ENCODE measurements at regions of chr17 and their contacts with region 1.

Region 1: DNA sequence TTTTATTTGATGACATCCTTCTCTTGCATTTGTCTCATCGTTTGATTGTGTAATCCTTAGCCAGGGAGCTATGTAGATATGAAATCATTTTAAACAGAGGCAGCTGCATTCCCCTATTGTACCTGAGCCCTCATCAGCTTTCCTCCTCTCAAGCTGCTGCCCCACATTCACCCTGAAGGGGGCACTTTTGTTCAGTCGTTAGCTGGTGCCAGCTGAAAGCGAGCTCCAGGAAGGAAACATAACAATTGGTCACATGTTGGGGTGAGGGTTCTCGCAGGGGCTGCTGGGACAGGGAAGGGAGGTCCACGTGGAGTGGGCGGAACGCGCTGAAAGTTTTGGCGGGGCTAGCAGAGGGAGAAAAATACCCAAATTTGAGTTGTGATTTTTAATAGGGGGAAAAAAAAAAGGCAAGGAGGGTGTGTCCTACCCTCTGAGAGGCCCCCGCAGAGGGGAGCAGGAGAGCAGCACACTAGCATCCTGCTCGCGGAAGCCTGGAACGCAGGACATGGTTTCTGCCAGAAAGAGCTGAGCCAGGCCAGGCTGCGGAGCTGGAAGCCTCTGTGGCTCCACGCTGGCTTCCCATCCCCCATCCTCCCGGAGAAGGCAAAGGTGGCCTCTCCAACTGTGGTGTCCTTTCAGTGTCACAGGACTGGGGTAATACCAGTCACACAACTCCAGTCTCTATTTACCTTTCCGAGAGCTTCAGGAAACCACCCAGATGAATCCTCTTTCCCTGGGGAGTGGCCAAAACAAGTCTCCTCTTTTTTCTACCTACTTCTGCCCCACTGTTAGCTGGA is 8.5 kb upstream of the MSL1 start:
- DNase-seq: peak; percentile 83
- ATAC-seq: peak; percentile 91
- H3K4me3 ChIP-seq: peak overlapping the region; percentile 37; the same call in 1 of the 2 replicates
- H3K27ac ChIP-seq: peak overlapping the region; percentile 82
- H3K4me1 ChIP-seq: peaks cover 28% of the 10 kb centered on the region
- H3K27me3 ChIP-seq: no peaks in the 10 kb centered on the region
- CTCF ChIP-seq: peak; percentile 84 to 98 (median 91); a peak in 4 of 6 replicates
- EP300 ChIP-seq: no peak; a peak in 1 of 4 replicates
- POLR2A ChIP-seq: peak; percentile 65
- RAD21 ChIP-seq: peak; percentile 92

Region 2: GRCh38 chr17:40021451-40021971 is 91.8 kb before region 1 on chr17:
- CTCF ChIA-PET with region 1: interaction called, 58 read pairs
- POLR2A ChIA-PET with region 1: interaction called, 3 read pairs
- RAD21 ChIA-PET with region 1: interaction called, 52 read pairs
- SMC1A ChIA-PET with region 1: interaction called, 50 read pairs
- in situ Hi-C with region 1: no loop called
- intact Hi-C with region 1: no loop called
- DNase-seq: no peak
- ATAC-seq: no peak
- H3K4me3 ChIP-seq: no peak overlapping the region
- H3K27ac ChIP-seq: no peak overlapping the region
- H3K4me1 ChIP-seq: no peaks in the 10 kb centered on the region
- H3K27me3 ChIP-seq: no peaks in the 10 kb centered on the region
- CTCF ChIP-seq: no peak
- EP300 ChIP-seq: no peak
- POLR2A ChIP-seq: no peak
- RAD21 ChIP-seq: no peak

Region 3: DNA sequence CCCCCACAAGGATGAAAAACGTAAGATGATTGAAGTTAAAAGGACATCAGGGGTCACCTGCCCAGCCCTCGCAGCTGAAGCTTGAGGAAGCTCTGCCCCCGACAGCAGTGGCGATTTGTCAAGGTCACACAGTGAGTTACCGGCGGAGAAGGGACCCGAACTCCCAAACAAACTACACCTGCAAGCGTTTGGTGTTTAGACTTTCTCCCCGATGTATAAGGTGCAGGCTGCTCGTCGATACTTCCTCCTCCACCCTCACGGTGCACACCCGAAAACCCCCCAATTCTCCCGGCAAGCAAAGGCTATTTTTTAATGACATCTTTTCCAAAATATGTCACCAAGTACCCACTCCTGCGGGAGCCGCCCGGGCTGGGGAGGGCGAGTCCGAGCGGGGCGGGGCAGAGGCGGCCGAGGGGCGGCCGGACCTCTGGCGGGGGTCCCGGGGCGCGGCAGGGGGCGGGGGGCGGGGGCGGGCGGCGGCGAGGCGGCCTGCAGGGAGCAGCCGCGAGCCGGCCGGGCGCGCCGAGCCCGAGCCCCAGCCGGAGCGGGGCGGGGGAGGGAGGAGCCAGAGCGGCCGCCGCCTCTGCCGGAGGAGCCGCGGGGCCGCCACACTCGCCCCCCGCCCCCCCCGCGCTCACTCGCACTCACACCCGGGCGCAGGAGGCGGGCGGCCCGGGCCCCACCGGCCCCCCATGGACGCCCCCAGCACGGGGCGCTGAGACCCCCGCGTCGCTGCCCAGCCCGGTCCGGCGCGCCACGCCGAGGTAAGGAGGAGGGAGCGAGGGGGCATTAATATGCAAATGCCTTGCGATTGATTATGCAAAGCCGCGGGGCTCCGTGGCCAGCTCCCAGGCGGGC is 50.8 kb before region 1 on chr17 and contains the start of gene THRA:
- CTCF ChIA-PET with region 1: interaction called, 120 read pairs
- POLR2A ChIA-PET with region 1: interaction called, 3 read pairs
- RAD21 ChIA-PET with region 1: interaction called, 42 read pairs
- SMC1A ChIA-PET with region 1: interaction called, 19 read pairs
- in situ Hi-C with region 1: no loop called
- intact Hi-C with region 1: no loop called
- DNase-seq: no peak
- ATAC-seq: peak; percentile 89
- H3K4me3 ChIP-seq: peak within 1 kb of the TSS; percentile 93
- H3K27ac ChIP-seq: no peak within 1 kb of the TSS
- H3K4me1 ChIP-seq: peaks cover 5% of the 10 kb centered on the region
- H3K27me3 ChIP-seq: peaks cover 10 to 11% of the 10 kb centered on the region in 2 experiments; a peak in 3 of 4 replicates
- CTCF ChIP-seq: peak in 1 of 3 experiments; percentile 27; a peak in 2 of 6 replicates
- EP300 ChIP-seq: no peak
- POLR2A ChIP-seq: no peak
- RAD21 ChIP-seq: no peak
- polyA plus RNA-seq, gene THRA: 0.03 to 0.07 TPM

Region 4: DNA sequence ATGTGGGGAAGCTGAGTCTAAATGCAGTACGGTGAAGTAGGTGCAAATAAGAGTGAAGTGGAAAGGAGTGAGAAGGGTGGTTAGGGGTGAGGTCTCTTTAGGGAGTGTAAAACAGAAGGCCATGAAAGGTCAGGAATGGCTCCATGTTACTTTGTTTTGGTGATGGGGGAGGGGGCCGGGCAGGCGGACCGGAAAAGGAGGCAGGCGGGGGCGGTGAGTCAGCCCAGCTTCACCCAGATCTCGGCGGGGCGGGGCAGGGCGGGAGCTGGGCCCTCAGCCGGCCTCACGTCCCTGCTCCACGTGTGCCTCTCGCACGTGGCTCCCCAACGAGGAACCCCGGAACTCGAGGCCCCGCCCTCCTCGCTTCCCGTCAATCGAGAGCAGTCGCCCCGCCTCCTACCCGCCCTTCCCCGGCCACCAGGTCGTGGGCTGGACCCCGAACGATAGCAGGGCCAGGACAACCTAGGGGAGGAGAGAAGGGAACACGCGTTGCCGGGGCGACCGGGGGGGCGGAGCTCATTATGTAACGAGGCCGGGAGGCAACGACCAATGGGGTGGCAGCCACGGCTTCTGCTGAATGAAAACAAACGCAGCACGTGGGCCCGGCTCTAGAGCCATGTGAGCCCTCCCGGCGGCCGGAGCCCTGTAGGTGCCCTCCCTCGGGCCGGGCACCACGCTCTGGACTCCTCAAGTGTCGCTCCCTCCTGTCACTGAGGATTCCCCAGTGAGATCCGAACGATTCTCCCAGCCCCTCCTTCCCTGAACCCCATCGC is 14.3 kb before region 1 on chr17:
- CTCF ChIA-PET with region 1: interaction called, 176 read pairs
- POLR2A ChIA-PET with region 1: interaction called, 50 read pairs
- RAD21 ChIA-PET with region 1: interaction called, 155 read pairs
- SMC1A ChIA-PET with region 1: interaction called, 132 read pairs
- in situ Hi-C with region 1: no loop called
- intact Hi-C with region 1: loop called (anchors 1 kb)
- DNase-seq: peak; percentile 97
- ATAC-seq: peak; percentile 80
- H3K4me3 ChIP-seq: peak overlapping the region; percentile 90
- H3K27ac ChIP-seq: peak overlapping the region; percentile 88
- H3K4me1 ChIP-seq: peaks cover 64% of the 10 kb centered on the region
- H3K27me3 ChIP-seq: no peaks in the 10 kb centered on the region
- CTCF ChIP-seq: no peak
- EP300 ChIP-seq: no peak
- POLR2A ChIP-seq: no peak; the same call in 1 of the 2 replicates
- RAD21 ChIP-seq: no peak

Region 5: GRCh38 chr17:40176754-40177110 is 63.4 kb after region 1 on chr17:
- CTCF ChIA-PET with region 1: interaction called, 42 read pairs
- POLR2A ChIA-PET with region 1: interaction called, 23 read pairs
- RAD21 ChIA-PET with region 1: interaction called, 246 read pairs
- SMC1A ChIA-PET with region 1: interaction called, 35 read pairs
- in situ Hi-C with region 1: no loop called
- intact Hi-C with region 1: no loop called
- DNase-seq: no peak
- ATAC-seq: no peak
- H3K4me3 ChIP-seq: no peak overlapping the region
- H3K27ac ChIP-seq: no peak overlapping the region
- H3K4me1 ChIP-seq: peaks cover 4% of the 10 kb centered on the region
- H3K27me3 ChIP-seq: no peaks in the 10 kb centered on the region
- CTCF ChIP-seq: no peak
- EP300 ChIP-seq: no peak
- POLR2A ChIP-seq: no peak
- RAD21 ChIP-seq: no peak

Region 6: DNA sequence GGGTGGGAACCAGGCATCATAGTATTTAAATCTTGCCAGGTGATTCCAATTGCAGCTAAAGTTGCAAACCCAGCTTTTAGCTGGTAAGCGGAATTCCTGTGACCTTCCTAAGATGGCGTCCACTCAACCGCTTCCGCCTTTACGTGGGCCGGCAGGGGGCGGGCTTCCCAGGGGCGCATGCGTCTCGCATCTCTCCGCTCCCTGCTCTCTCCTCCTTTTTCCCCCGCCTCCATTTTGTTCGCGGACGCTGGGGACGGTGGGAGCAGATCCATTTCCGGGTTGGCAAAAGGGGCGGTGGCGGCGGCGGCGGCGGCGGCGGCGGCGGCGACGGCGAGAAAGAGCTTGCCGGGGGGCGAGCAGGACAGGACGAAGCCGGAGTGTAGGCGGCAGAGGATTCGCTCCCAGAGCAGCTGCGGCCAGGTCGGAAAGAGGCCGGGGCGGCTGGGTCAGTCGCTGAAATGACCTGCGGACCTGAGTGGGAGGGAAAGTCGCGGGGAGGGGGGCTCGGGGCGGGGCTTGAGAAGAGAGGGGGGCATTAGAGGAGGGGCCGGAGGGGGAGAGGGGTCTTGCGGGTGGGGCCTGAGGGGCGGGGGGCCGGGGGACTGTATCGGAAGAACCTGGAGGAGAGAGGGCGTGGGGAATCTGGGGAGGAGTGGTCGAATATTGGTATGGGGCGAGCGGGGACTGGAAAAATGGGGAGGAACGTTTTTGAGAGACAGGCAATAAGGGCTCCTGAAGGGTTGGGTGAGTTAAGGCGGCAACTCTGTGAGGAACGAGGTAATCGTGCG is 106.0 kb after region 1 on chr17 and contains the start of gene WIPF2:
- CTCF ChIA-PET with region 1: interaction called, 18 read pairs
- POLR2A ChIA-PET with region 1: interaction called, 11 read pairs
- RAD21 ChIA-PET with region 1: interaction called, 12 read pairs
- SMC1A ChIA-PET with region 1: interaction called, 12 read pairs
- in situ Hi-C with region 1: no loop called
- intact Hi-C with region 1: no loop called
- DNase-seq: peak; percentile 87
- ATAC-seq: peak; percentile 96
- H3K4me3 ChIP-seq: peak within 1 kb of the TSS; percentile 99
- H3K27ac ChIP-seq: peak within 1 kb of the TSS; percentile 73
- H3K4me1 ChIP-seq: peaks cover 4% of the 10 kb centered on the region; the same call in 1 of the 2 replicates
- H3K27me3 ChIP-seq: no peaks in the 10 kb centered on the region
- CTCF ChIP-seq: peak; percentile 33 to 45 (median 37); a peak in 4 of 6 replicates
- EP300 ChIP-seq: no peak
- POLR2A ChIP-seq: peak; percentile 82
- RAD21 ChIP-seq: no peak
- polyA plus RNA-seq, gene WIPF2: 4.2 to 5.5 TPM

Measured in GM12878 (cell line).